Aorta (tissue), 5 donors: ENCODE measurements at regions of chr22 and their contacts with region 1.

Region 1: GRCh38 chr22:21850660-21851059 is 16.8 kb downstream of the MAPK1 start:
- DNase-seq: no peak
- ATAC-seq: no peak
- H3K4me3 ChIP-seq: no peak overlapping the region
- H3K27ac ChIP-seq: no peak overlapping the region
- H3K4me1 ChIP-seq: peaks cover 2 to 11% of the 10 kb centered on the region in 2 donors
- H3K27me3 ChIP-seq: no peaks in the 10 kb centered on the region

Region 2: GRCh38 chr22:21735200-21736076 is 115.2 kb before region 1 on chr22 and contains the start of gene YPEL1:
- intact Hi-C with region 1: no loop called
- DNase-seq: peak; percentile 98 to 99
- ATAC-seq: peak; percentile 99
- H3K4me3 ChIP-seq: peak within 1 kb of the TSS; percentile 80 to 94
- H3K27ac ChIP-seq: peak within 1 kb of the TSS in 1 of 2 donors; percentile 45
- H3K4me1 ChIP-seq: no peaks in the 10 kb centered on the region
- H3K27me3 ChIP-seq: no peaks in the 10 kb centered on the region
- total RNA-seq, gene YPEL1: 4.7 to 9.1 TPM

Region 3: GRCh38 chr22:21807544-21808529 is 42.8 kb before region 1 on chr22:
- intact Hi-C with region 1: loop called in 1 of 2 experiments (anchors 5 kb)
- DNase-seq: no peak
- ATAC-seq: no peak
- H3K4me3 ChIP-seq: no peak overlapping the region
- H3K27ac ChIP-seq: no peak overlapping the region
- H3K4me1 ChIP-seq: peaks cover 0 to 1% of the 10 kb centered on the region in 2 donors
- H3K27me3 ChIP-seq: no peaks in the 10 kb centered on the region

Region 4: GRCh38 chr22:21816787-21817496 is 33.7 kb before region 1 on chr22:
- intact Hi-C with region 1: loop called in 1 of 2 experiments (anchors 5 kb)
- DNase-seq: no peak
- ATAC-seq: peak; percentile 88
- H3K4me3 ChIP-seq: no peak overlapping the region
- H3K27ac ChIP-seq: peak overlapping the region in 1 of 2 donors; percentile 47
- H3K4me1 ChIP-seq: peaks cover 0 to 15% of the 10 kb centered on the region in 2 donors
- H3K27me3 ChIP-seq: no peaks in the 10 kb centered on the region

Region 5: GRCh38 chr22:21867528-21868266 is 17.0 kb after region 1 on chr22 and contains the start of gene MAPK1:
- intact Hi-C with region 1: no loop called
- DNase-seq: peak; percentile 96 to 98
- ATAC-seq: peak; percentile 98
- H3K4me3 ChIP-seq: peak within 1 kb of the TSS; percentile 97
- H3K27ac ChIP-seq: peak within 1 kb of the TSS; percentile 91 to 95
- H3K4me1 ChIP-seq: peaks cover 0 to 3% of the 10 kb centered on the region in 2 donors
- H3K27me3 ChIP-seq: no peaks in the 10 kb centered on the region
- total RNA-seq, gene MAPK1: 137 to 159 TPM

Region 6: DNA sequence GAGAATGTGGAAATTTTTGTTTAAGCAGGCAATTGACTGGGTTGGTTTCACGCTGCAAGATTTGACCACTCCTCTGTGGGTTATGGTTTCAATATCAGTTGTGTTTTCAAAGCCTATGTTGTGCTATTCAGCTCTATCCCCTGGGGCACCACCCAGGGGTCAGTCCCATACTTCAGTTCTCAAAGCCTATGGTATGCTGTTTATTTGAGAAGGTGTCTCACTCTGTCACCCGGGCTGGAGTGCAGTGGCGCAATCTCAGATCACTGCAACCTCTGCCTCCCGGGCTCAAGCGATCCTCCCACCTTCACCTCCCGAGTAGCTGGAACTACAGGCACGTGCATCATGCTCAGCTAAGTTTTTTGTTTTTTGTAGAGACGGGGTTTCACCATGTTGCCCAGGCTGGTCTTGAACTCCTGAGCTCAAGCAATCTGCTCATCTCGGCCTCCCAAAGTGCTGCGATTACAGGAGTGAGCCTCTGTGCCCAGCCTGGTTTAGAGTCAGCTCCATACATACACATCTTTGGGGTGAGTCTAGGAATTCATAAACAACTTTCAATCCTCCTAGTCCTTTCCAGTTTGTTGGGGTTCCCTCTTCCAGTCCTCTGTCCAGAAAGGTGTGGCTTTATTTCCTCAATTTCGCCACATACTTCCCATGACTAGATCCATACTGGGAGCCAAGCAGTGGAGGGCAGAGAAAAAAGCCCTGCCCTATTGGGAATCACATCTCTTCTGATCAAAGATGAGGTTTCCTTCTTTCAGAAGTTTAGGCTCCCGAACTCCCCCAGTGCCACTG is 51.8 kb after region 1 on chr22:
- intact Hi-C with region 1: no loop called
- DNase-seq: no peak
- ATAC-seq: no peak
- H3K4me3 ChIP-seq: no peak overlapping the region
- H3K27ac ChIP-seq: no peak overlapping the region
- H3K4me1 ChIP-seq: no peaks in the 10 kb centered on the region
- H3K27me3 ChIP-seq: no peaks in the 10 kb centered on the region